H1 (cell line): ENCODE measurements at regions of chr19 and their contacts with region 1.

Region 1: DNA sequence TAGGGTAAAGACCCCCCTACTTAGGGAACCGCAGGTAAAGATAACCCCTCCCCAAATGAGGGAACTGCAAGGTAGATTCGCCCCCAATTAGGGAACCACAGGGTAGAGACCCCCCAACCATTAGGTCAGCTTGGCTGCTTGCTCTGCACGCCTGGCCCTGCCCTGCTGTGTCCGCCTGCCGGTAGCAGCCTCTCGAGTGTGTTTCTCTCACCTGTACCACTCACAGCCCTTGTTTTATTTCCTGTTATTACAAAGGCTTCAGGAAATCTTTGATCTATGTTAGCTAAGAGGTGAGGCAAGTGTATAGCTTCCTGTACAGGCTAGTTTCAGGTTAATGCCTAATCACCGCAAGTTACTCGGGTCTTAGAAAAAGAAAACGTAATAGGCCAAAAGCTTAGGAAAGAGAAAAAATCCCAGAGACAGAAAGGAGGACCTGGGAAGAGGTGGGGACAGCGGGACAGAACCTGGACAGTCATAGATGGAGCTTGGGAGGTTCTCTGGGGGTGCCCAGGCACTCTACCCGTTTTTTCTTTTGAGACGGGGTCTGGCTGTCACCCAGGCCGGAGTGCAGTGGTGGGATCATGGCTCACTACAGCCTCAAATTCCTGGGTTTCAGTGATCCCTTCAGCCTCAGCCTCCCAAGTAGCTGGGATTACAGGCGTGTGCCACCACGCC is 23.1 kb upstream of the EIF3G start:
- DNase-seq: no peak
- H3K4me3 ChIP-seq: no peak overlapping the region
- H3K27ac ChIP-seq: no peak overlapping the region
- H3K4me1 ChIP-seq: no peaks in the 10 kb centered on the region
- H3K27me3 ChIP-seq: no peaks in the 10 kb centered on the region
- CTCF ChIP-seq: no peak
- EP300 ChIP-seq: no peak
- POLR2A ChIP-seq: no peak
- RAD21 ChIP-seq: no peak

Region 2: DNA sequence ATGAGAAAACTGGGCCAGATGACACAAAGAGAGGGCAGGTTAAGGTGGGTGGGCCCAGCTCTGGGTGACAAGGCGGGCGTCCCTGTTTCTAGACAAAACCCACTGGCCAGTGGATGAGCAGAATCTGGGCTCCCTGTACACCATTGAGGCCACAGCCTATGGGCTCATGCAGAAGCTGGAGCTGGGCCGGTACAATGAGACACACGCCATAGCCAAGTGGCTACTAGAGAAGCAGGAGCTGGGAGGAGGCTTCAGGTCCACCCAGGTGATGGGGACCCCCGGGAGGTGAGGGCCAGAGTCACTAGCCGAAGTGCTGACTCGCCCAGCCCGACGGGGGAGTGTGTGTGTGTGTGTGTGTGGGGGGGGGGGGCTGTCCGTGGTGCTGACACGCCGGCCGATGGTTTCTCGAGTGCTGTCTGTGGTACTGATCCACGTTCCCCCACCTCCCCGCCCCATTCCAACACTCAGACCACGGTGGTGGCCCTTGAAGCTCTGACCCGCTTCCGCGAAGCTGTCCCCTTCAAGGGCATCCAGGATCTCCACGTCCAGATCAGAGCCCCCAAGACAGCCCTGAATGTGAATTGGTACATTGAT is 81.0 kb before region 1 on chr19:
- CTCF ChIA-PET with region 1: no interaction called
- POLR2A ChIA-PET with region 1: no interaction called
- DNase-seq: no peak
- H3K4me3 ChIP-seq: no peak overlapping the region
- H3K27ac ChIP-seq: no peak overlapping the region
- H3K4me1 ChIP-seq: no peaks in the 10 kb centered on the region
- H3K27me3 ChIP-seq: no peaks in the 10 kb centered on the region
- CTCF ChIP-seq: no peak
- EP300 ChIP-seq: no peak
- POLR2A ChIP-seq: no peak
- RAD21 ChIP-seq: no peak

Region 3: GRCh38 chr19:10126213-10126639 is 16.6 kb before region 1 on chr19:
- CTCF ChIA-PET with region 1: interaction called, 3 read pairs
- POLR2A ChIA-PET with region 1: interaction called, 10 read pairs
- DNase-seq: no peak
- H3K4me3 ChIP-seq: no peak overlapping the region
- H3K27ac ChIP-seq: no peak overlapping the region
- H3K4me1 ChIP-seq: no peaks in the 10 kb centered on the region
- H3K27me3 ChIP-seq: no peaks in the 10 kb centered on the region
- CTCF ChIP-seq: no peak
- EP300 ChIP-seq: no peak
- POLR2A ChIP-seq: no peak
- RAD21 ChIP-seq: no peak